Dorsolateral prefrontal cortex (tissue), 120 donors: ENCODE measurements at regions of chr5 and their contacts with region 1.

Region 1: DNA sequence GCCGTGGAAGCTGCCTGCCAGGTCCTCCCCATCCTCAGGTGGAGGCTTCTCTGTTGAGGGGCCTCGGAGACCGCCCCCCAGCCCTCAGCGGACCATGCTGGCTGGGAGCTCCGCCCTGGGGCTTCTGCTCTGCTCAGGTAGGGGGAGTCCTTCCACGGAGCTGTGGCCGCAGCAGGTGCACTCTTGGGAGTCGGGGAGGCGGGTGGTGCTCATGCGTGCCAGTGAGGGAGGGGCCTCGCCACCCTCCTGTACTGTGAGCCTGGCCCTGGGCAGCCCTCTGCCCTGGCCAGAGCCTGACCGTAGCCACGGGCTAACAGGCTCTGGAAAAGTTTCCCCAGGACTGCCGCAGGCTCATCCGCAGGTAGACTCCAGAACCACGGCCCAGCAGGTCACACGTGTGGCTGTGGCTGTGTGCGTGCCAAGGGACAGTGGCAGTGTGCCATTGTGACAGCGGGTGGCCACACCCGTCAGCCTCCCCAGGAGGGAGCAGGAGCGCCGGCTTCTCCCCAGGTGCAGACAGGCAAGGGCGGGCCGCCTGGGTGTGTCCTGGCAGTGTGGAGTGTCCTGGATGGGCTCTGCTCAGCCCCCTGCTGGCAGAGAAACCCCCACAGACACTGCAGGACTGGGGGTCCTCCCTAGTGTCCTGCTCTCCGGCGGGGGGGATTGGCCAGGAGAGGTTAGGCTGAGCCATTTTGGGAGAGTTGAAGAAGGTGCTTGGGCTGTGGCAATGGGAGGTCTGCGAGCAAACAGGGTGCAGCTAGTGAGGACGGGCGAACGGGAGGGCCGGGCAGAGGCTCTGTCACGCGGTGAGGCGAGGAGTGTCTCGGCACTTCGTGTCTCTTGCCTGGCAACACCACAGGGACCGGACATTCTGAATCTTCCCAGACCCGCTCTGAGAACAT is 29.5 kb downstream of the TPPP start:
- DNase-seq: no peak
- H3K4me3 ChIP-seq: no peak overlapping the region
- H3K27ac ChIP-seq: peak overlapping the region in 52 of 59 donors; percentile 12 to 100 (median 96)
- H3K27me3 ChIP-seq: no peaks in the 10 kb centered on the region
- CTCF ChIP-seq: no peak

Region 2: DNA sequence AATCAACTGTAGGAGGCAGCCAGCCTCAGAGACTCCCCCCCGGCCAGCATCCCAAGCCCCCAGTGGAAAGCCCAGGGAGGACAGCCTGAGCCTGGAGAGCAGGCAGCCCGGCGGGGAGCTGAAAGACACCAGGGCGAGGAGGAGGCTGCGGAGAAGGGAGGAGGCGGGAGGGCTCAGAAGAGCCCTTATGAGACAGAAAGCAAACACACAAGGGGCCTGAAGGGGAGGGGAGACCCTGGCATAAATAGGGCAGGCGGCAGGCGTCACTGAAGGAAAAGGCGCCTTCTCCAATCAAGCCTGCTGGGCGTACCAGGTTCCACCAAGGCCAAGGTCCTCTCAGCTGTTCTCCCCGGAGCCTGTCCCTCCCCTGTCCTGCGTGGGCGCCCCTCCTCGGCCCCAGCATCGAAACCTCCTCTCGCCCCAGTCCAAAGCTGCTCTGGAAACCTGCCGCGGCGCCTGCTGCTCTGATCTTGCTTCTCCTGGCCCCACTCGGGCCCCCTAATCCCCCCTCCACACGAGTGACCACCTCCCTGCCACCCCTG is 140.7 kb before region 1 on chr5:
- intact Hi-C with region 1: no loop called
- DNase-seq: no peak
- H3K4me3 ChIP-seq: peak overlapping the region in 20 of 59 donors; percentile 14 to 60 (median 49)
- H3K27ac ChIP-seq: no peak overlapping the region
- H3K27me3 ChIP-seq: peaks cover 0 to 100% (median 92%) of the 10 kb centered on the region in 45 donors
- CTCF ChIP-seq: no peak

Region 3: GRCh38 chr5:611721-612486 is 51.8 kb before region 1 on chr5 and contains the start of gene CEP72:
- intact Hi-C with region 1: loop called in 1 of 2 experiments (anchors 5 kb)
- DNase-seq: peak; percentile 84 to 96 (median 88)
- H3K4me3 ChIP-seq: peak within 1 kb of the TSS; percentile 65 to 98 (median 88)
- H3K27ac ChIP-seq: peak within 1 kb of the TSS in 5 of 59 donors; percentile 36 to 79 (median 59)
- H3K27me3 ChIP-seq: peaks cover 0 to 2% (median 0%) of the 10 kb centered on the region in 45 donors
- CTCF ChIP-seq: peak in 2 of 56 donors; percentile 12 to 33
- total RNA-seq, gene CEP72: 4.0 to 11.0 (median 7.0) TPM